ENCODE measurements at regions of chr2 and their contacts with region 1.

Region 1: GRCh38 chr2:113209011-113209641 is 35.4 kb downstream of the PSD4 start:
- DNase-seq: no peak
- H3K4me3 ChIP-seq: no peak overlapping the region
- H3K27ac ChIP-seq: no peak overlapping the region
- H3K4me1 ChIP-seq: peaks cover 7 to 30% (median 22%) of the 10 kb centered on the region in 4 donors
- H3K27me3 ChIP-seq: no peaks in the 10 kb centered on the region
- CTCF ChIP-seq: no peak
- EP300 ChIP-seq: no peak
- POLR2A ChIP-seq: no peak

Region 2: DNA sequence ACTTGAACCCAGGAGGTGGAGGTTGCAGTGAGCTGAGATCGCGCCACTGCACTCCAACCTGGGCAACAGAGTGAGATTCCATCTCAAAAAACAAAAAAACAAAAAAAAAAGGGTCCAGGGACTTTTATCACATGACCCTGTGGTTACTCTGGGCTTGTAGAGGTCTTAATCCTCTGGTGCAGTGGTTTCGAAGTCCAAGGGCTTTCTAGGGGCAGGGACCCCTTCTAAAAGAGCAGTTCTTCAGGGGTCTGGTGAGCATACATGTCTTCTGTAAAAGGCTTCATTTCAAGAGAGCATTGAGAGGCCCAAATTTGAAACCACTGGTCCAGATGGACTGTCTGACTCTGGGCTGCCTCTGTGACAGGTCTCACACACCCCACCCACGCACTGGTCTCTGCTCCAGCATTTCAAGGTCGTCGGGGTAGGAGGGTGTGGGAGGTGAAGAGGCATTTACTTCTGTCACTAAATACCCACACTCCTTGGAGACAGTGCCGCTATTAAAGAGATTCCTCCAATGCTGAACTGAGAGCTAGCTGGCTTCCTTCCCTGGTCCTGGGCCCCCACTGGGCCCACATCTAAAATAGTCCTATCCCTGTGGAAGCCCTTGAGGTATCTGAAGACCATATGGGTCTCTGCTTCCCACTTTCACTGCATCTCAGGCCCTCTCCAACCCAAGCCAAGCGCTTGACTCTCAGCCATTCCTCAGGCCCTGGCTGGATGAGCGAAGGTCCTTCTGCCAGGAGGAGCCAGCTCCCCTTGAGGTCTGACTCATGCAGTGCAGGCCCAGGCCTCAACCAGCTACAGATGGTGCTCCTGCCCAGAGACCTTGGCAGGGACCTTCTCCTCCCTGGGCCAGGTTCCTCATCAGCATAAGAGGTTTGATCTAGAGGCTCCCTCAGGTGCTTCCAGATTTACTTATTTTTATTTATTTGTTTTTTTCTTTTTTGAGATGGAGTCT is 24.7 kb after region 1 on chr2:
- in situ Hi-C with region 1: no loop called
- intact Hi-C with region 1: loop called (anchors 2 kb)
- DNase-seq: no peak
- H3K4me3 ChIP-seq: no peak overlapping the region
- H3K27ac ChIP-seq: no peak overlapping the region
- H3K4me1 ChIP-seq: peaks cover 0 to 5% (median 0%) of the 10 kb centered on the region in 4 donors
- H3K27me3 ChIP-seq: no peaks in the 10 kb centered on the region
- CTCF ChIP-seq: no peak
- EP300 ChIP-seq: no peak
- POLR2A ChIP-seq: no peak

Region 3: DNA sequence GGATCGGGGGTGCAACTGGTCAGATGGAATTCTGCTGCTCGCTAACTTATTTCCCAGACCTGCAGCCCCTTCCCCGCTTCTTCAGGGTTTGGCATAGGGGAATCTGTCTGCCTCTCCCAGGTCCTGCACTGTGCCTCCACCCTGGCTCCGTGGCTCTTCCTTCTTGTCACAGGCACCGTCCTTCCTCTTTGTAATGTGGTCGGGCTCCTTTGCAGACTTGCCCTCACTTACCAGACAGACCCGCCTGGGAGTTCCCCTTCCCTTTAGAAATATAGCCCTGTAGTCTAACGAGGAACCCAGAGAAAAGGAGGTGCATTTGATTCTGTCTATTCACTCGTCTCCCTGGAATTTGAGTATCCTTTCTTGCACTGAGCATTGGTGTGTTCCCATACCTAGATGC is 133.5 kb after region 1 on chr2:
- in situ Hi-C with region 1: no loop called
- intact Hi-C with region 1: no loop called
- DNase-seq: no peak
- H3K4me3 ChIP-seq: no peak overlapping the region
- H3K27ac ChIP-seq: no peak overlapping the region
- H3K4me1 ChIP-seq: no peaks in the 10 kb centered on the region
- H3K27me3 ChIP-seq: no peaks in the 10 kb centered on the region
- CTCF ChIP-seq: no peak
- EP300 ChIP-seq: no peak
- POLR2A ChIP-seq: no peak